Esophagus muscularis mucosa (tissue), 4 donors: ENCODE measurements at regions of chr16 and their contacts with region 1.

Region 1: GRCh38 chr16:53130159-53131049 is 75.6 kb downstream of the CHD9 start:
- DNase-seq: peak; percentile 99
- H3K4me3 ChIP-seq: peak overlapping the region; percentile 83 to 91 (median 90)
- H3K27ac ChIP-seq: peak overlapping the region; percentile 93 to 97 (median 96)
- H3K4me1 ChIP-seq: peaks cover 22 to 49% (median 43%) of the 10 kb centered on the region in 4 donors
- H3K27me3 ChIP-seq: no peaks in the 10 kb centered on the region
- CTCF ChIP-seq: peak; percentile 70 to 88 (median 80)
- EP300 ChIP-seq: no peak
- POLR2A ChIP-seq: peak; percentile 28

Region 2: DNA sequence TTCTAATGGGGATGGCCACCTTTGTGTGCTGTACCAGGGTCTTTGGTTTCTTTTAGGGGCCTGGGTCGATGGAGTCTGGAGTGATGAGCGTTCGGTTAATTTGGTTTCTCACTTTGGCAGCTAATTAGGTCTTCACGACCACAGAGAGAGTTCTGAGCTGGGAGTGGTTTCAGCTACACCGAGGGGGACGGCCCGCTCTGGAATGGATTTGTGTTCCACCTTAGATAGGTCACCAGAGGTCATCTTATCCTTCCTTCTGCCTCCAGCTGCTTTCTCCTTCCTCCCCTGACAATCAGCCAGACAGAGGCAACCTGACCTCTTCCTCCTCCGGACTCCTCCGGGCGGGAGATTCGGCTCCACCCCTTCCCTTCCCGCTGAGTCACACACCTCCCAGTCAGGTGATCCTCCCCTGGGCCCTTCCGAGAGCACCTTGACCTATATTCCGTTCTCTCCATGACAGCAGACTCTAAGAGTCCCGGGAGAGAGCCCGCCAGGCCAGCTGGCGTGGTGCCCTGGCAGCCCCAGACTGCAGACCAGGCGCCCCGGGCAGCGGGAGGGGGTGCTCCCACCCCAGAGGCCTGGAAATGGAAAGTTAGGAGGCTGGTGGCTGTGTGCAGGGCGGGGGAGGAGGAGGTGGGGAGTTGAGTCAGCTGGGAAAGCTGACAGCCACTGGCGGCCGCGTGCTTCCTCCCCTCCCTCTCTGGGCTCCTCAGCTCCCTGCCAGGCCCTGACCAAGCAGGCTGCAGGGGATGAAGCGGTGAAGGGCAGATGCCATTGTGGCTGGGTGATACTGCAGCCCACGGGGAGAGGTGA is 30.9 kb before region 1 on chr16:
- intact Hi-C with region 1: loop called (anchors 2 kb)
- DNase-seq: peak; percentile 95
- H3K4me3 ChIP-seq: peak overlapping the region; percentile 47 to 58 (median 52)
- H3K27ac ChIP-seq: peak overlapping the region; percentile 84 to 94 (median 92)
- H3K4me1 ChIP-seq: peaks cover 42 to 60% (median 55%) of the 10 kb centered on the region in 4 donors
- H3K27me3 ChIP-seq: no peaks in the 10 kb centered on the region
- CTCF ChIP-seq: no peak
- EP300 ChIP-seq: no peak
- POLR2A ChIP-seq: no peak

Region 3: DNA sequence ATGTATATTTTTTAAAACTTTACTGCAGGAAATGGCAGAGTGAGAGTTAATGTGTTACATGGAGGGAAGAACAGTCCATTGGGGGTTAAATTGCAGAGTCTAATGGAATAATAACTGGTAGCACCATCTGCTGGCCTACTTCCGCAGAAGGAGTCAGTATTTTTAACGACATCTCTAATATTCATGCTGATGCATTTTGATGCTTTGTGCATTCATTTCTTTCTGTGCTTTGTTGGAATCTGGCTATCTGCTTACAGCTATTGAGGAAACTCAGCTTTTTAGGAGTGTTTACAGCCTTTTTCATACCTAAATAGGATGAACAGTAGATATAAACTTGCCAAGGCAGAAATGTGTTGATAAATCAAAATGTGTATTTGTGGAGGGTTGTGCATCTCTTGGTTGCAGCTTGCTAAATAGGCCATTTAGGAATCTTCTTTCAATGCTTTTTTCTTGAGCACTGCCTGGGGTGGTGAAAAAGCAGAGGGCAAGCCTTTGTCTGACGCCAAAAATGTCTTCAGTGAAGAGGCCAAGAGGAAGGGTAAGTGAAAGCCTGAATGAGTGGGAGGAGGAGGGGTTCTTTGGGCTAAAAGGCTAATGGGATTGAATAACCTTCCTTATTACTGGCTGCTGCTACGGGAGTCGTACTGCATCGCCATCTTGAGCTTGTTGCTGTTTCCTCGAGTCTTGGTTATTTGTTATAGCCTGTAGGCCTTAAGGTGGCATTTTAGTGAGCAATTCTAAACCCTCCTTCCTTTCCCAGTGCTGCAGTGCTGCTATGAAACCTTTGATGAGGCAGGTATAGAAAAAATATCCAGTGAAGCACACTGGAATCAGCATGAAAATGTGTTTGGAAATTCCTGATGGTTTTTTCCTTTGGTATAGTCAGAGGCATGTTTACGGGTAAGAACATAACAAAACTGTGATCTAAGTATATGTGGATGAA is 77.7 kb after region 1 on chr16:
- intact Hi-C with region 1: loop called (anchors 5 kb)
- DNase-seq: no peak
- H3K4me3 ChIP-seq: peak overlapping the region; percentile 42 to 57 (median 44)
- H3K27ac ChIP-seq: peak overlapping the region; percentile 71 to 84 (median 78)
- H3K4me1 ChIP-seq: peaks cover 45 to 60% (median 56%) of the 10 kb centered on the region in 4 donors
- H3K27me3 ChIP-seq: no peaks in the 10 kb centered on the region
- CTCF ChIP-seq: peak; percentile 49 to 58 (median 53)
- EP300 ChIP-seq: no peak
- POLR2A ChIP-seq: no peak